Activated T-helper 1 cell treated with anti-CD3 and anti-CD28 coated beads, Interleukin-12 subunit alpha, Interleukin-12 subunit beta, Interleukin-2, Interleukin-4 antibody, amounts not matched to agents 30 ng/mL and 10 ng/mL and 1 ng/mL, durations not matched to agents 14 hours and 24 hours and 36 hours (primary cell): ENCODE measurements at regions of chr14 and their contacts with region 1.

Region 1: GRCh38 chr14:61662437-61663311 is 32.6 kb upstream of the HIF1A start:
- DNase-seq: peak; percentile 64
- H3K4me3 Mint-ChIP-seq: peak overlapping the region; percentile 76
- H3K27ac Mint-ChIP-seq: peak overlapping the region; percentile 99
- H3K4me1 Mint-ChIP-seq: peaks cover 70% of the 10 kb centered on the region
- H3K27me3 Mint-ChIP-seq: no peaks in the 10 kb centered on the region

Region 2: DNA sequence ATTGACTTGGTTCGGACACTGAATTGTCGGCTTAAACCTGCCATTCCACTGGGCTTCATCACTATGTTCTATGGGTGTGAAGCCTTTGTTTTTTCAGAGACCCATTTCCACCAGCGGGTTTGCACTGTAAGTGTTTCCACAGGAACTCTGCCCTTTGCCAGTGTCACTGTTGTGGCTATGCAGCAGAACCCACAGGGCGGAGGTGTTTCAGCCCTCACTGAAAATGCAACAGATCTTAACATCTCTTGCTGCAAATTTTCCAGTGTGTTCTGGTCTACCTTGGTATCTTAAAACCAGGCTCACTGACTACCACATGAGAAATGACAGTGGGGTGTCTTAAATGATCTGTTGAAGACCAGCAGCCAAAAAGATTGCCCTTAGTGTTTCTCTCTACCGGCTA is 320.2 kb before region 1 on chr14:
- intact Hi-C with region 1: loop called (anchors 5 kb)
- DNase-seq: peak; percentile 85
- H3K4me3 Mint-ChIP-seq: peak overlapping the region; percentile 82
- H3K27ac Mint-ChIP-seq: peak overlapping the region; percentile 97
- H3K4me1 Mint-ChIP-seq: peaks cover 92% of the 10 kb centered on the region
- H3K27me3 Mint-ChIP-seq: no peaks in the 10 kb centered on the region

Region 3: DNA sequence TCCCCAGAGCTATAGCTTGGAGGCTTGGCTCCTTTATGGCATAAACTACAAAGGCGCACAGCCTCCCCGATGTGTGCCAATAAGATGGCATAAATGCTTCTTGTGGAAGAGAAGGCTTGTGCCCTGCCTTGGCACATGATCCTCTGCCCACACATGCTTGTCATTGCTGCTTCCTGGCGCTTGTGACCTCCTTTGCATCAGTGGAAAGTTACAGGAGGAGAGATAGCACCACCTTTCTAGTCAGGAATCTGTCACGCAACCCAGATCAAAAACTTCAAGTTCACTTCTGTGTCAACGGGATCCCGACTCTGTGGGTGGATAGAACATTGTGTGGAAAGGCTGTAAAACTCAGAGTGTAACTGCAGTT is 151.1 kb before region 1 on chr14:
- intact Hi-C with region 1: loop called (anchors 2 kb)
- DNase-seq: peak; percentile 13
- H3K4me3 Mint-ChIP-seq: peak overlapping the region; percentile 64
- H3K27ac Mint-ChIP-seq: peak overlapping the region; percentile 88
- H3K4me1 Mint-ChIP-seq: peaks cover 83% of the 10 kb centered on the region
- H3K27me3 Mint-ChIP-seq: no peaks in the 10 kb centered on the region

Region 4: GRCh38 chr14:61568572-61569131 is 94.0 kb before region 1 on chr14:
- intact Hi-C with region 1: loop called (anchors 2 kb)
- DNase-seq: peak; percentile 55
- H3K4me3 Mint-ChIP-seq: peak overlapping the region; percentile 75
- H3K27ac Mint-ChIP-seq: peak overlapping the region; percentile 66
- H3K4me1 Mint-ChIP-seq: peaks cover 94% of the 10 kb centered on the region
- H3K27me3 Mint-ChIP-seq: no peaks in the 10 kb centered on the region

Region 5: DNA sequence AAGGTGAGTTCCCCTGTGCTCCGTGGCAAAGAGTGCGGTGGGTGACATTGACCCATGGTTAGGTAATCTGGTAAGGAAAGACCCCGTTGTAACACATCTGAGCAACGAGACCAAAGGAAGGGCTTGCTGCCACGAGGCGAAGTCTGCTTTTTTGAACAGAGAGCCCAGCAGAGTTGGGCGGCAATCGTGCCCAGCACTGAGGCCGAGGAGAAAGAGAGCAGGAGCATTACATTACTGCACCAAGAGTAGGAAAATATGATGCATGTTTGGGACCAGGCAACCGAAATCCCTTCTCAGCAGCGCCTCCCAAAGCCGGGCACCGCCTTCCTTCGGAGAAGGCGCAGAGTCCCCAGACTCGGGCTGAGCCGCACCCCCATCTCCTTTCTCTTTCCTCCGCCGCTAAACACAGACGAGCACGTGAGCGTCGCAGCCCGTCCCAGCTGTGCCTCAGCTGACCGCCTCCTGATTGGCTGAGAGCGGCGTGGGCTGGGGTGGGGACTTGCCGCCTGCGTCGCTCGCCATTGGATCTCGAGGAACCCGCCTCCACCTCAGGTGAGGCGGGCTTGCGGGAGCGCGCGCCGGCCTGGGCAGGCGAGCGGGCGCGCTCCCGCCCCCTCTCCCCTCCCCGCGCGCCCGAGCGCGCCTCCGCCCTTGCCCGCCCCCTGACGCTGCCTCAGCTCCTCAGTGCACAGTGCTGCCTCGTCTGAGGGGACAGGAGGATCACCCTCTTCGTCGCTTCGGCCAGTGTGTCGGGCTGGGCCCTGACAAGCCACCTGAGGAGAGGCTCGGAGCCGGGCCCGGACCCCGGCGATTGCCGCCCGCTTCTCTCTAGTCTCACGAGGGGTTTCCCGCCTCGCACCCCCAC is 32.4 kb after region 1 on chr14 and contains the start of gene HIF1A:
- intact Hi-C with region 1: loop called (anchors 1 kb)
- DNase-seq: peak; percentile 95
- H3K4me3 Mint-ChIP-seq: peak within 1 kb of the TSS; percentile 94
- H3K27ac Mint-ChIP-seq: peak within 1 kb of the TSS; percentile 97
- H3K4me1 Mint-ChIP-seq: peaks cover 63% of the 10 kb centered on the region
- H3K27me3 Mint-ChIP-seq: no peaks in the 10 kb centered on the region
- total RNA-seq, gene HIF1A: 241 and 247 TPM in 2 replicates

Region 6: GRCh38 chr14:61894452-61895077 is 231.9 kb after region 1 on chr14:
- intact Hi-C with region 1: loop called (anchors 5 kb)
- DNase-seq: peak; percentile 27
- H3K4me3 Mint-ChIP-seq: no peak overlapping the region
- H3K27ac Mint-ChIP-seq: no peak overlapping the region
- H3K4me1 Mint-ChIP-seq: peaks cover 12% of the 10 kb centered on the region
- H3K27me3 Mint-ChIP-seq: peaks cover 14% of the 10 kb centered on the region